Pancreas (tissue), 10 donors: ENCODE measurements at regions of chr6 and their contacts with region 1.

Region 1: DNA sequence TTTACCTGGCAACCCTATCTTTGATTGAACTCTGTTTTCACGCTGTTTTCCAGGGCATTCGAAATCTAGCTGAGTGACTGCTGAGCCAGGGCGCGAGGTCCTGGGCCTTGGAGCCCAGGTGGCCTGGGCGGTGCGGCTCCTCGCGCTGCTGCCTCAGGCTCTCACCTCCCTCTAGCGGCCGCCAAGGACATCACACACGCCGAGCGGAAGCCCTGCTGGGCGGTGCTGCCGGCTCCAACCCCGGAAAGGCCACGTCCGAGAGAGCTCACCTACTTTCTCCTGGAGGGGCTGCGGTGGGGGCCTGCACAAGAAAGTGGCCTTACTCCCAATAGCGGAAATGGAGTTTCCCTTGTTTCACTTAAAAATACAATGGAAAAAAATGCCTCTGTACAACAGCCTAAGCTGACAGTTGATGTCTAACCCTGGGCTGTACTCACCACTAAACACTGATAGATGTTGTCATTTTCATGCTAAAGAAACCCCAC is 77.7 kb downstream of the ELOVL4 start:
- DNase-seq: peak; percentile 80 to 94 (median 88)
- ATAC-seq: peak; percentile 96 to 98 (median 98)
- H3K4me3 ChIP-seq: peak overlapping the region in 1 of 4 donors; percentile 23
- H3K27ac ChIP-seq: peak overlapping the region in 3 of 4 donors; percentile 6 to 53 (median 22)
- H3K4me1 ChIP-seq: peaks cover 3 to 34% (median 19%) of the 10 kb centered on the region in 3 donors
- H3K27me3 ChIP-seq: no peaks in the 10 kb centered on the region
- CTCF ChIP-seq: peak; percentile 87 to 96 (median 92)

Region 2: DNA sequence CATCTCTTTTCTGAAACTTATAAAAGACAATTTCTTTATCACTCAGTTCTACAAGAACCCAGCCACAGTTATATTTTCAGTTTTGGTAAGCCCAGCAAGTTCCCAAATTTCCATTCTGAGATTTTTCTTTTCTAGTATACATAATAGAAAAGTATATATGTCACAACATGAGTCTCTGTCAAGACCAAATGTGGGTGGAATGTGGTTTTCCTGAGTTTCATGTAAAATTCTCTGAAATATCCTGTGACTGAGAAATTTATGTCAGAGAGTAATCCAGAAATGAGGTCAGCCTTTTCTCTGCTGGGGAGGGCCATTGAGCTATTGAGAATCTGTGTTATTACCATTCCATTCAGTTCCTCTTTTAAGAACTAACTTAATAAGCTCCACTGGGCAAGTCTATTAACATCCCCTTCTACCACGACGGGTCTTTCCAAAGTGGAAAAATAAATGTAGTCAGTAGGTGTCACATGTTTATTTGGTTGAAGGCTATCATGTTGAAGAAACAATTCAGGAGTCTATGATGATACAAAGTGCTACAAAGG is 534.4 kb before region 1 on chr6:
- intact Hi-C with region 1: no loop called
- DNase-seq: no peak
- ATAC-seq: no peak
- H3K4me3 ChIP-seq: no peak overlapping the region
- H3K27ac ChIP-seq: no peak overlapping the region
- H3K4me1 ChIP-seq: no peaks in the 10 kb centered on the region
- H3K27me3 ChIP-seq: no peaks in the 10 kb centered on the region
- CTCF ChIP-seq: no peak

Region 3: DNA sequence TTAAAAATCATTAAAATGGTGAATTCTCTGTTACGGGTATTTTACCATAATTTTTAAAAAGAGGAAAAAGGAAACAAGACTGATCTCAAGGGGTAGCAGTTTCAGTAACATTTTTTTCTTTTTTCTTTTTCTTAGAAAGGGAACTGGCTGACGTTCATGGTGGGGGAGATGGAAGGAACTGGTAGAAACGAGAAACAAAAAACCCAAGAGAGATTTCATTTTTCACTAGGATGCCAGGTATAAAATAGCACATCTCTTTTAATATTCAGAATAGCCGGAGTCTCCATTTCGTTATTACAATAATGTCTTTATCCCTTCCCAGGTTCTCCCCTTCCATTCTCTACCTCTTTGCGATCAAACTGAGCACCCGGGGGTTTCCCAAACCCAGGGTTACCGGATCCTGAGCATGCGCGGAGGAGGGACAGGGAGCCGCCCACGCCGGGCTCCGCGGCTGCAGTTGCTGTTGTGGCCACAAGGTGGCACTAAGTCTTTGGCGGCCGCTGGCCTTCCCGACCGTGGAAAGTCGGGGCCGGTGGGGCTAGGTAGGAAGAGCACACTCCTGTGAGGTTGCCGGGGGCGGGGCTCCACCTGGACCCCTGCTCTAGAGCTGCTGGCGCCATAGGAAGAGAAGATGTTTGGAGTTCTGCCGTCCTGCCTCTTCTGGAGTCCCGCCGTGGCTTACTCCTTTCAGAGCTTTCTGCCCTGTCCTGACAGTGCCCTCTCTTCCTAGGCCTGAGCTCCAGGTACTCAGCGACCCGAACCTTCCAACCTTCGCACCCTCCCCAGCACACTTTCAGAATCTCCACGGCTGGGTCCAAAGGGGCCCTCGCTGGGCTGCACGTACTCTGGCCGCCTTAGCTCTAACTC is 91.7 kb before region 1 on chr6:
- intact Hi-C with region 1: loop called in 2 of 3 experiments (anchors 5 to 10 kb)
- DNase-seq: peak; percentile 67 to 97 (median 84)
- ATAC-seq: peak; percentile 94 to 100 (median 98)
- H3K4me3 ChIP-seq: peak overlapping the region in 2 of 4 donors; percentile 11 to 28
- H3K27ac ChIP-seq: no peak overlapping the region
- H3K4me1 ChIP-seq: no peaks in the 10 kb centered on the region
- H3K27me3 ChIP-seq: no peaks in the 10 kb centered on the region
- CTCF ChIP-seq: peak; percentile 98 to 99 (median 98)

Region 4: GRCh38 chr6:79782792-79783580 is 86.7 kb before region 1 on chr6:
- intact Hi-C with region 1: loop called in 2 of 3 experiments (anchors 5 to 10 kb)
- DNase-seq: no peak
- ATAC-seq: no peak
- H3K4me3 ChIP-seq: no peak overlapping the region
- H3K27ac ChIP-seq: no peak overlapping the region
- H3K4me1 ChIP-seq: no peaks in the 10 kb centered on the region
- H3K27me3 ChIP-seq: no peaks in the 10 kb centered on the region
- CTCF ChIP-seq: no peak